ENCODE measurements at regions of chr9 and their contacts with region 1.

Region 1: DNA sequence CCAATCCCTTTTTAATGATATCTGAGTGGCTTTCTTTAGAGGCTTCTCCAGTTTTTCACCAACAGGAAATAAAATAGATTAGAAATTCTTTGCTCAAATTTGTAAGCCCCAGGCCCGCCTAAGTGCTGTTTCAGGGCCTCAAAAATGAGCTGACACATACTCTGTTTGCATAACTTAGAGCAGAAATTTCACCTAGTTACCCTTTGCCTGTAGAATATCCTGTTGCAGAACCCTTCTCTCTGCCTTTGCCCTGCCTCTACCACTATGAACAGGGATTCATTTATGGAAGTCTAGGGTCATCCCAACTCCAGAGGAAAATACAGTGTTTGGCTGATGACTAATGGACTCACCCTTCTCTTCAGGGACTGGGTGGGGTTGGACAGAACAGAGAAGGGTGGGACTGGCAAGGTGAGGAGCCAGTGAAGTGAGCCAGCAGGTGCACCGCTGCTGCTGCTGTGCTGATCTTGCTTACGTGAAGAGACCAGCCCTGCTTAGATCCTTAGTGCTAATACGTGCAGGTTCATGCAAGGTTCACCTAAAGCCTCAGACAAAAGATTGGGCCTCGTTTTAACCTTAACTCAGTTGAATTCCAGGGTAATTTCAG is 22.8 kb downstream of the OSTF1 start:
- DNase-seq: no peak
- ATAC-seq: no peak
- H3K4me3 Mint-ChIP-seq: no peak overlapping the region
- H3K27ac Mint-ChIP-seq: peak overlapping the region; percentile 31
- H3K4me1 Mint-ChIP-seq: peaks cover 52% of the 10 kb centered on the region
- H3K27me3 Mint-ChIP-seq: no peaks in the 10 kb centered on the region
- CTCF ChIP-seq: no peak

Region 2: DNA sequence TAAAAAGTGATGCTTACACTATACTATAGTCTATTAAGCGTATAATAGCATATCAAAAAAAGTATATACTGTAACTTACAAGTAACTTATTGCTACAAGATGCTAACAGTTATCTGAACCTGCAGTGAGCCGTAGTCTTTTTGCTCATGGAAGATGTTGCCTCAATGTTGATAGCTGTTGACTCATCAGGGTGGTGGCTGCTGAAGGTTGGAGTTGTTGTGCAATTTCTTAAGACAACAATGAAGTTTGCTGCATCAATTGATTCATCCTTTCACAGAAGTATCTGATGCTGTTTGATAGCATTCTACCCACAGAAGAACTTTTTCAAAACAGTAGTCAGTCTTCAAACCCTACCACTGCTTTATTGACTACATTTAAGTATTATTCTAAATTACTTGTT is 150.6 kb before region 1 on chr9:
- CTCF ChIA-PET with region 1: no interaction called
- POLR2A ChIA-PET with region 1: no interaction called
- intact Hi-C with region 1: no loop called
- DNase-seq: no peak
- ATAC-seq: no peak
- H3K4me3 Mint-ChIP-seq: no peak overlapping the region
- H3K27ac Mint-ChIP-seq: no peak overlapping the region
- H3K4me1 Mint-ChIP-seq: no peaks in the 10 kb centered on the region
- H3K27me3 Mint-ChIP-seq: no peaks in the 10 kb centered on the region
- CTCF ChIP-seq: no peak

Region 3: GRCh38 chr9:75096796-75097195 is 14.3 kb before region 1 on chr9:
- CTCF ChIA-PET with region 1: no interaction called
- POLR2A ChIA-PET with region 1: no interaction called
- intact Hi-C with region 1: loop called (anchors 2 kb)
- DNase-seq: no peak
- ATAC-seq: no peak
- H3K4me3 Mint-ChIP-seq: no peak overlapping the region
- H3K27ac Mint-ChIP-seq: no peak overlapping the region
- H3K4me1 Mint-ChIP-seq: peaks cover 56% of the 10 kb centered on the region
- H3K27me3 Mint-ChIP-seq: no peaks in the 10 kb centered on the region
- CTCF ChIP-seq: no peak

Region 4: GRCh38 chr9:75138260-75139040 is 27.3 kb after region 1 on chr9:
- CTCF ChIA-PET with region 1: no interaction called
- POLR2A ChIA-PET with region 1: no interaction called
- intact Hi-C with region 1: no loop called
- DNase-seq: no peak
- ATAC-seq: no peak
- H3K4me3 Mint-ChIP-seq: no peak overlapping the region
- H3K27ac Mint-ChIP-seq: no peak overlapping the region
- H3K4me1 Mint-ChIP-seq: peaks cover 7% of the 10 kb centered on the region
- H3K27me3 Mint-ChIP-seq: no peaks in the 10 kb centered on the region
- CTCF ChIP-seq: no peak

Region 5: DNA sequence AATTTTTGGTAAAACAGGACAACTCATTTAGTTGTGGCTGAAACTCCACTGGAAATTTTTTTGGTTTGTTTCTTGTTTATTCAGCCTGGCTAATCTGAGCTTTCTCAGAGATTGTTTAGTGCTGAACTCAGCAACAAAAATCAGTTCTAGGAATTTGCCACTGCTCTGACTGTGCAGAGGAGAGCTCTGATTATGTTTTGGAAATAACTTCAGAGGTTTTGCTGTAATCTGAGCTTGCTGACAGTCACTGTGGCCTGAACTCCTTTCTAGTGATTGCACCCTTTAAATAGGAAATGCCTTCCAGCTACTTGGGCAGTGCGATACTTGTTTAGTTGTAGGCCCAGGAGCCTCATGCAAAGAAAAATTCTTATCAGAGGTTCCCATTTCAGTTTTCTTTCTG is 37.4 kb after region 1 on chr9:
- CTCF ChIA-PET with region 1: no interaction called
- POLR2A ChIA-PET with region 1: no interaction called
- intact Hi-C with region 1: loop called (anchors 5 kb)
- DNase-seq: no peak
- ATAC-seq: no peak
- H3K4me3 Mint-ChIP-seq: no peak overlapping the region
- H3K27ac Mint-ChIP-seq: no peak overlapping the region
- H3K4me1 Mint-ChIP-seq: peaks cover 28% of the 10 kb centered on the region
- H3K27me3 Mint-ChIP-seq: no peaks in the 10 kb centered on the region
- CTCF ChIP-seq: no peak